Activated B cell treated with CpG ODN at 0.5 μM for 24 hours (primary cell): ENCODE measurements at regions of chr2 and their contacts with region 1.

Region 1: GRCh38 chr2:69643602-69644505 is at the start of gene AAK1:
- DNase-seq: peak; percentile 85
- ATAC-seq: peak; percentile 70
- H3K4me3 Mint-ChIP-seq: peak within 1 kb of the TSS; percentile 97
- H3K27ac Mint-ChIP-seq: peak within 1 kb of the TSS; percentile 91
- H3K4me1 Mint-ChIP-seq: peaks cover 45% of the 10 kb centered on the region
- H3K27me3 Mint-ChIP-seq: peaks cover 64% of the 10 kb centered on the region
- CTCF ChIP-seq: no peak
- total RNA-seq, gene AAK1: 4.7 and 5.6 TPM in 2 replicates

Region 2: GRCh38 chr2:68463287-68463877 is 1180.5 kb before region 1 on chr2:
- CTCF ChIA-PET with region 1: no interaction called
- POLR2A ChIA-PET with region 1: no interaction called
- intact Hi-C with region 1: no loop called
- DNase-seq: no peak
- ATAC-seq: no peak
- H3K4me3 Mint-ChIP-seq: no peak overlapping the region
- H3K27ac Mint-ChIP-seq: no peak overlapping the region
- H3K4me1 Mint-ChIP-seq: peaks cover 19% of the 10 kb centered on the region
- H3K27me3 Mint-ChIP-seq: no peaks in the 10 kb centered on the region
- CTCF ChIP-seq: peak; percentile 57

Region 3: GRCh38 chr2:68742626-68743415 is 901.0 kb before region 1 on chr2:
- CTCF ChIA-PET with region 1: no interaction called
- POLR2A ChIA-PET with region 1: interaction called, 12 read pairs
- intact Hi-C with region 1: no loop called
- DNase-seq: no peak
- ATAC-seq: peak; percentile 49
- H3K4me3 Mint-ChIP-seq: peak overlapping the region; percentile 55
- H3K27ac Mint-ChIP-seq: peak overlapping the region; percentile 87
- H3K4me1 Mint-ChIP-seq: peaks cover 91% of the 10 kb centered on the region
- H3K27me3 Mint-ChIP-seq: no peaks in the 10 kb centered on the region
- CTCF ChIP-seq: no peak

Region 4: DNA sequence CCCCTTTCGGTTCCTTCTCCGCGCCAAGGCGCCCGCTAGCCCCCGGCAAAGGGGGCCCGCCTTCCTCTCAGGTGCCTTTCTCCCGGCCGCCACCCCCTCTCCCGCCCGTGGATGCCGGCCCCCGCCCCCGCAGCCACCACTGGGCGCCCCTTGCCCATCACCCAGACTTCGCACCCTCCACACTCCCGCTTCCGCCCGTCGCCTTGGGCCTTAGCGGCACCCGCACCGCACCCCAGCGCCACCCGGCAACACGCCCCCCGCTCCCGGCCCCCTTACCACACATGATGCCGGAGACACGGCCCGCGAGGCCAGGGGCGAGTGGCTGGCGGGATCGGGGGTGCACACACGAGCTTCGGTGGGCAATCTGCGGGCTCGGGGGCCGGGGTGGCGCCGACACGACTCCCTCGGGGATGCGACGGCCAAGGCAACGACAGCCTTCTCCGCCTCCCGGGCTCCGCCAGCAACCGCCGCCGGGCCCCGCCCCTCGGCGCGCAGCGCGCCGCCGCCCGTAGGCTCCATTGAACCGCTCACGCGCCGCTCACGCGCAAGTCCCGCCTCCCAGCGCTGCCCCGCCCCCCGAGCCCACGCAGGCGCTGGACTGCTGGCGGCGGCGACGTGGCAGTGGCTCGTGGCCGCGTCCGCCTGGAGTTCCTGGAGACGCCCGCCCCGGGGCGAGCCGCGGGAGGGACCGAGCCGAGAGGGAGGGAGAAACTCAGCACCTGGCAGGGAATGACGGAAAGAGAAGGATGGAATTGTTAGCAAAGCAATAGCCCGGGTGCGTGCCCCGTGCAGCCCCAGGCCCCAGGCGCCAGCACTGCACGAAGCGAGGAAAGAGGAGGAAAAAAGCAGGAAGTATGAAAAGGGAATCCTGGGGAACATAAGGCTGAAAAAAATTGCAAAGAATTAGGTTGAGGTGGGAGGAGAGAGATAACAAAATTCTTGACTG is 256.8 kb before region 1 on chr2 and contains the start of gene GFPT1:
- CTCF ChIA-PET with region 1: no interaction called
- POLR2A ChIA-PET with region 1: no interaction called
- intact Hi-C with region 1: loop called (anchors 5 kb)
- DNase-seq: peak; percentile 94
- ATAC-seq: peak; percentile 97
- H3K4me3 Mint-ChIP-seq: peak within 1 kb of the TSS; percentile 88
- H3K27ac Mint-ChIP-seq: peak within 1 kb of the TSS; percentile 81
- H3K4me1 Mint-ChIP-seq: peaks cover 38% of the 10 kb centered on the region
- H3K27me3 Mint-ChIP-seq: no peaks in the 10 kb centered on the region
- CTCF ChIP-seq: no peak
- total RNA-seq, gene GFPT1: 11.5 and 14.9 TPM in 2 replicates

Region 5: DNA sequence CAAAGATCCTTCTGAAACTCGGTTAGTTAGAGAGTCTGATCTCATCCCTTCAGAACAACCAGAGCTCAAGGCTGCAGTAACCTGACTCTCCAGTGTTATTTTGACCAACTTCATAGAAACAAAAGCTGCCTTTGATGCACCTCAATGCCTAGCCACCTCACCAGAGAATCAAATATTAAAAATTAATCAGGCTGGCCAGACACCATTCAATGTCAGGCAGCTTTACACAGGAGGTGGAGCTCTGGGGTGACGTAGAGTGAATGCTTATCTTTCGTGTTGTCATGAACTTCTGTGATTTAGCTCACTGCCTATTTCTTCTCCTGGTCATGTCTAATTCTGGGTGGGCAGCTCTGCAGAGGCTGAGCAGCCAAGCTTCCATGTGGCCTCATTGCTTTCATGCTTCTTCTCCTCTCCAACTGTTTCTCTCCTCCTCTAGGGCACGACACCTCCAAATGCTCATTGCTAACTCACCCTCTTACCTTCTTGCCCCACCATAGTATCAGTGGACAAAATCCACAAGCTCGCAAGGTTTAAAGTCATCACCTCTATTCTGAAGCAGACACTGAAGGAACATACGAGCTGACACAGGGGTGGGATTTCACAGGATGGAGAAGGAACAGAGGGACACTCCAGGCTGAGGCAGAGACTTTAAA is 39.7 kb before region 1 on chr2:
- CTCF ChIA-PET with region 1: no interaction called
- POLR2A ChIA-PET with region 1: interaction called, 10 read pairs
- intact Hi-C with region 1: no loop called
- DNase-seq: no peak
- ATAC-seq: no peak
- H3K4me3 Mint-ChIP-seq: no peak overlapping the region
- H3K27ac Mint-ChIP-seq: no peak overlapping the region
- H3K4me1 Mint-ChIP-seq: peaks cover 8% of the 10 kb centered on the region
- H3K27me3 Mint-ChIP-seq: peaks cover 17% of the 10 kb centered on the region
- CTCF ChIP-seq: no peak

Region 6: DNA sequence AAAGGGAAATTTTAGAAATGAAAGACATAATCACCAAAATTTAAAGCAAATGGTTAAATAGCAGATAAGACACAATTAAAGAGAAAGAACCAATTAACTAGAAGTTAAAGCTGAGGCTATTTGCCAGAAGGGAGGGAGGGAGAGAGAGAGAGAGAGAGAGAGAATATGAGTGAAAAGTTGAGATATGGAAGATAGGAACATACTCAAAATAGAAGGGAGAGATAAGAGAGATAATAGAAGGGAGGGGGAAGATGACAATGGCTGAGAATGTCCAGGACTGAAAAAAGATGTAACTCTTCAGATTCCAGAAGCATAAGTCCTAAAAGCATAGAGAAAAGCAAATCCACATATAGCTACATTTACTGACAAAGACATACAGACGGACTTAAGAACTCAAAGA is 16.8 kb after region 1 on chr2:
- CTCF ChIA-PET with region 1: no interaction called
- POLR2A ChIA-PET with region 1: no interaction called
- intact Hi-C with region 1: no loop called
- DNase-seq: no peak
- ATAC-seq: no peak
- H3K4me3 Mint-ChIP-seq: no peak overlapping the region
- H3K27ac Mint-ChIP-seq: no peak overlapping the region
- H3K4me1 Mint-ChIP-seq: no peaks in the 10 kb centered on the region
- H3K27me3 Mint-ChIP-seq: peaks cover 46% of the 10 kb centered on the region
- CTCF ChIP-seq: no peak

Region 7: GRCh38 chr2:69717861-69718273 is 74.0 kb after region 1 on chr2:
- CTCF ChIA-PET with region 1: no interaction called
- POLR2A ChIA-PET with region 1: no interaction called
- intact Hi-C with region 1: loop called (anchors 1 kb)
- DNase-seq: no peak
- ATAC-seq: no peak
- H3K4me3 Mint-ChIP-seq: no peak overlapping the region
- H3K27ac Mint-ChIP-seq: no peak overlapping the region
- H3K4me1 Mint-ChIP-seq: peaks cover 4% of the 10 kb centered on the region
- H3K27me3 Mint-ChIP-seq: peaks cover 39% of the 10 kb centered on the region
- CTCF ChIP-seq: no peak

Region 8: GRCh38 chr2:69893684-69894551 is 250.1 kb after region 1 on chr2 and contains the start of gene SNRNP27:
- CTCF ChIA-PET with region 1: no interaction called
- POLR2A ChIA-PET with region 1: no interaction called
- intact Hi-C with region 1: loop called (anchors 5 kb)
- DNase-seq: peak; percentile 69
- ATAC-seq: peak; percentile 88
- H3K4me3 Mint-ChIP-seq: peak within 1 kb of the TSS; percentile 100
- H3K27ac Mint-ChIP-seq: peak within 1 kb of the TSS; percentile 98
- H3K4me1 Mint-ChIP-seq: peaks cover 43% of the 10 kb centered on the region
- H3K27me3 Mint-ChIP-seq: no peaks in the 10 kb centered on the region
- CTCF ChIP-seq: no peak
- total RNA-seq, gene SNRNP27: 43.0 and 49.1 TPM in 2 replicates

Region 9: DNA sequence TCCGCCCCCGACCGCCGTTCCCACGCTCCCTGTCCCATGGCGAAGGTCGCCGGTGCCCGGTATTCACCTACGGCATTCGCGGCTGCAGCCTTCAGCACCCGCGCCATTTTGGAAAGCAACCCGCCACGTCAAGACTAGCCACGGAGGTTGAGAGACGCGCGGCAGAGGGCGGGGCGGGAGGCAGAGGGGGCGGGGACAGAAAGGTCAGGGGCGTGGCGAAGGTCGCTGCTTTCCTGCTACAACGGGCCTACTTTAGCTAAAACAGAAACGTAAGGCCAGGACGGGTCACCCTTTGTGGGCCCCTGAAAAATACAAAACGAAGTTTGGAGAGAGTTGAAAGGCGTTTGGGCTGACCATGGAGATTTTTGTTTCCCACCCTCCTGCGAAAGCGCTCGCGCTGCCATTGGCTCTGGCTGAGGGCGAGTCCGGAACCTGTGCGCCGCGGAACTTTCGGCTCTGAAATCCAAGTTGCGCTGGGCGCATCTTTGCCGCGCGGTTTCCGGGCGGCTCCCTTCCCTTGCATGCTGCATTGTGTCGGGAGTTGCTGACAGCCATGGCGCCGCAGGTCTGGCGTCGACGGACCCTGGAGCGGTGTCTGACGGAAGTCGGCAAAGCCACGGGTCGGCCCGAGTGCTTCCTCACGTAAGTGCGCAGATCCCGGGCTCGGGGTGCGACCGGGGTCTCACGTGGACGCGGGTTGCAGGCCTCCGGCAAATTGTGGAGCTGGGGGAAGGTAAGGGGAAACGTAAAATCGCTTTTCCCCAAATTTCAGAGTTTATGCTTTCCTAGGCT is 1486.5 kb after region 1 on chr2 and contains the starts of genes MCEE and MPHOSPH10:
- CTCF ChIA-PET with region 1: no interaction called
- POLR2A ChIA-PET with region 1: interaction called, 3 read pairs
- intact Hi-C with region 1: loop called (anchors 2 kb)
- DNase-seq: peak; percentile 79
- ATAC-seq: peak; percentile 94
- H3K4me3 Mint-ChIP-seq: no peak within 1 kb of the TSS
- H3K27ac Mint-ChIP-seq: no peak within 1 kb of the TSS
- H3K4me1 Mint-ChIP-seq: peaks cover 17% of the 10 kb centered on the region
- H3K27me3 Mint-ChIP-seq: no peaks in the 10 kb centered on the region
- CTCF ChIP-seq: no peak
- total RNA-seq, gene MCEE: 11.1 and 12.2 TPM in 2 replicates
- total RNA-seq, gene MPHOSPH10: 47.6 and 47.8 TPM in 2 replicates